ENCODE measurements at regions of chr1 and their contacts with region 1.

Region 1: DNA sequence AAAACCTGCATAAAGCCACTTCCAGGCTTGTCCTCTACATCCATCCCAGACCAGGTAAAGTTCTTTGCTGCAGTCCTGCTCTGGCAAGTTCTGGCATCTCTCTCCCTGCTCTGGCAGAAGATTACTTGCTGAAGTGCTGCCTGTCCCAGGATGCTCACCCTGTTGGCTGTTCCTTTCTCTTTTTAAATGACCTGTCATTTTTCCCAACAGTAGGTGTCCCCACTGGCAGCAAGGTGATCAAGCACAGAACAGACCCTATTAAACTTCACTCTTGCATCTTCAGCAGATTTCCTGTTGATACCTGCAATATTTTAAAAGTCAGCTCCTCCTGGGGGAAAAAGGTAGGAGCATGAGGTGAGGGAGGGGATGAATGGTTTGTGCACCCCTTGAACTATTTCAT is 332.6 kb downstream of the PBX1 start:
- DNase-seq: no peak
- H3K4me3 Mint-ChIP-seq: no peak overlapping the region
- H3K27ac Mint-ChIP-seq: no peak overlapping the region
- H3K4me1 Mint-ChIP-seq: no peaks in the 10 kb centered on the region
- H3K27me3 Mint-ChIP-seq: peaks cover 13% of the 10 kb centered on the region
- CTCF ChIP-seq: no peak

Region 2: GRCh38 chr1:164794310-164794709 is 97.3 kb before region 1 on chr1:
- CTCF ChIA-PET with region 1: no interaction called
- intact Hi-C with region 1: no loop called
- DNase-seq: peak; percentile 23
- H3K4me3 Mint-ChIP-seq: no peak overlapping the region
- H3K27ac Mint-ChIP-seq: no peak overlapping the region
- H3K4me1 Mint-ChIP-seq: no peaks in the 10 kb centered on the region
- H3K27me3 Mint-ChIP-seq: no peaks in the 10 kb centered on the region
- CTCF ChIP-seq: no peak

Region 3: GRCh38 chr1:164841702-164842465 is 49.7 kb before region 1 on chr1:
- CTCF ChIA-PET with region 1: no interaction called
- intact Hi-C with region 1: loop called (anchors 5 kb)
- DNase-seq: no peak
- H3K4me3 Mint-ChIP-seq: no peak overlapping the region
- H3K27ac Mint-ChIP-seq: no peak overlapping the region
- H3K4me1 Mint-ChIP-seq: no peaks in the 10 kb centered on the region
- H3K27me3 Mint-ChIP-seq: no peaks in the 10 kb centered on the region
- CTCF ChIP-seq: no peak

Region 4: DNA sequence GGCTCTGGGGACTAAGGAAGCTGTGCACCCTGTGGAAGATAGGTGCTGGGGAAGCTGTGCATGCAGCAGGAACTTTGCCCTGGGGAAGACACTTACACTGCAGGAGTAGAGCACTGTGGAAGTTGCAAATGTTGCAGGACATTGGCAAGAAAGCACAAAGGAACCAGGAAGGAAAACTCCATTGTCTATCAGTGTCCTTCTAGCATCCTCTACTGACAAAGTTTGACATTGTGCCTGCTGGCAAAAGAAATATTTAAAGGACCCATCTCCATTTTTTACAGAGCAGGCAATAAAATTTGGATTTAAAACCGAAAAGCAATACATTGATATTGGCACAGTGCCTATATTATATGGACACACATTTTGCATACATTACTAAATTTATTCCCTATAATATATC is 61.5 kb after region 1 on chr1:
- CTCF ChIA-PET with region 1: no interaction called
- intact Hi-C with region 1: no loop called
- DNase-seq: no peak
- H3K4me3 Mint-ChIP-seq: no peak overlapping the region
- H3K27ac Mint-ChIP-seq: no peak overlapping the region
- H3K4me1 Mint-ChIP-seq: no peaks in the 10 kb centered on the region
- H3K27me3 Mint-ChIP-seq: no peaks in the 10 kb centered on the region
- CTCF ChIP-seq: no peak

Measured in Calu3 (cell line).